Mammary epithelial cell (primary cell): ENCODE measurements at regions of chrX and their contacts with region 1.

Region 1: DNA sequence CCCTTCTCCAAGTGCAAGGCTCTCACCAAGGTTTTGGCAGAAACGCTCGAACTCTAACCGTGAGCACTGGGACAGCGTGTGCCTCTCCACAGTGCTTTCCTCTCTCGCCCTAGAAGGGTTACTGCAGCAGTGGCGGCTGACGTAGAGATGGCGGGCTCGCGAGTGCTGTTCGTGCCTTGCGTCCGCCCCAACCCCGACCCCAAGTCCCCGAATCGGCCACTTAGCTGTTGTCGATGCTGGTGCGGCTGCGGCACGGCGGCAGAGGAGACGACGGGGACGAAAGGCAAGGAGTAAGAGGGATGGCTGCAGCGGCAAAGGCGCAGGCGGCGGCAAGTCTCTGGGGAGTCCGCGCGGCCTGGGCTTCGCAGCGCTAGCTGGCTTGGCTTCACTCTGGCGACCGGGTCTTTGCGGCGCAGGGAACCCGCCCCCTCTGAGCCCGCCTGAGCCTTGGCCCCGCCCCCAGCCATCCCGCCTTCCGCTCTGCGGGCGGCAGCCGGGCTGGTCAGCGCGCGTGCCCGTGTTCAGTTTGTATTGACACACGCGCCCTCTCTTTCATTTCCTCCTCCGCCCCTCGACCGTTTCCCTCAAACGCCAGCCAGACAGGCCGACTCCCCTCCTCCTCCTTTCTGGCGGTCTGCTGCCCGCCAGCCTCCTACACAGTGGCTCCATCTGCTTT is at the start of gene SPIN4:
- DNase-seq: peak; percentile 76
- H3K4me3 ChIP-seq: peak within 1 kb of the TSS; percentile 35 to 82 (median 63)
- H3K27ac ChIP-seq: peak within 1 kb of the TSS; percentile 24
- H3K4me1 ChIP-seq: peaks cover 3% of the 10 kb centered on the region
- H3K27me3 ChIP-seq: no peaks in the 10 kb centered on the region
- CTCF ChIP-seq: no peak
- total RNA-seq, gene SPIN4: 2.8 to 13.0 TPM

Region 2: GRCh38 chrX:63330681-63331080 is 20.4 kb before region 1 on chrX:
- CTCF ChIA-PET with region 1: no interaction called
- dilution Hi-C with region 1: no loop called
- in situ Hi-C with region 1: no loop called
- intact Hi-C with region 1: no loop called
- DNase-seq: peak; percentile 80
- H3K4me3 ChIP-seq: no peak overlapping the region
- H3K27ac ChIP-seq: peak overlapping the region; percentile 40
- H3K4me1 ChIP-seq: peaks cover 4% of the 10 kb centered on the region
- H3K27me3 ChIP-seq: no peaks in the 10 kb centered on the region
- CTCF ChIP-seq: no peak

Region 3: GRCh38 chrX:63421411-63421810 is 70.3 kb after region 1 on chrX:
- CTCF ChIA-PET with region 1: no interaction called
- dilution Hi-C with region 1: no loop called
- in situ Hi-C with region 1: no loop called
- intact Hi-C with region 1: loop called (anchors 5 kb)
- DNase-seq: no peak
- H3K4me3 ChIP-seq: no peak overlapping the region
- H3K27ac ChIP-seq: no peak overlapping the region
- H3K4me1 ChIP-seq: peaks cover 14% of the 10 kb centered on the region
- H3K27me3 ChIP-seq: no peaks in the 10 kb centered on the region
- CTCF ChIP-seq: peak; percentile 19 to 31

Region 4: DNA sequence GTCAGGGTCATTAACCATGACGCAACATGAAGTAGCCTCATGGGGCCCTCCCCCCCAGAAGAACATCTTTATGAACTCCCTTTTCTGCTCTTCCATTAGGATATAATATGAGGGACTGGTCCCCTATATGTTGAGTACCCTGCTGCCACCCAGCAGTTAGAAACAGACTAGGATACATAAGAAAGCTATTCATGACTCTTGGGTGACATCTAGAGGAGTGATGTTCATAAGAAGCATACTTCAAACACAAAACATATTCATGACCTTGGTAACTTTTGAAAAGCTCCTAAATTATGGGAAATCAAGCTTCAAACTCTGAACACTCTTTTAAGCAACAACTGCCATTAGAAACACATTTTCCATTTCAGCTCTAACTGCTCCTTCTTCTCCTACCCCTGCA is 155.2 kb after region 1 on chrX:
- CTCF ChIA-PET with region 1: no interaction called
- dilution Hi-C with region 1: no loop called
- in situ Hi-C with region 1: no loop called
- intact Hi-C with region 1: loop called (anchors 5 kb)
- DNase-seq: peak; percentile 13
- H3K4me3 ChIP-seq: no peak overlapping the region
- H3K27ac ChIP-seq: no peak overlapping the region
- H3K4me1 ChIP-seq: peaks cover 6% of the 10 kb centered on the region
- H3K27me3 ChIP-seq: no peaks in the 10 kb centered on the region
- CTCF ChIP-seq: peak; percentile 32 to 44

Region 5: GRCh38 chrX:63560601-63561218 is 209.6 kb after region 1 on chrX:
- CTCF ChIA-PET with region 1: no interaction called
- dilution Hi-C with region 1: no loop called
- in situ Hi-C with region 1: no loop called
- intact Hi-C with region 1: loop called (anchors 2 kb)
- DNase-seq: peak; percentile 60
- H3K4me3 ChIP-seq: peak overlapping the region; percentile 67 to 83 (median 77)
- H3K27ac ChIP-seq: peak overlapping the region; percentile 55
- H3K4me1 ChIP-seq: no peaks in the 10 kb centered on the region
- H3K27me3 ChIP-seq: no peaks in the 10 kb centered on the region
- CTCF ChIP-seq: no peak